OCI-LY7 (cell line): ENCODE measurements at regions of chr3 and their contacts with region 1.

Region 1: GRCh38 chr3:59839810-59840515 is 790.1 kb upstream of the CFAP20DC start:
- DNase-seq: peak; percentile 23
- H3K4me3 ChIP-seq: no peak overlapping the region
- H3K27ac ChIP-seq: peak overlapping the region; percentile 27
- H3K4me1 ChIP-seq: peaks cover 15% of the 10 kb centered on the region
- CTCF ChIP-seq: no peak

Region 2: DNA sequence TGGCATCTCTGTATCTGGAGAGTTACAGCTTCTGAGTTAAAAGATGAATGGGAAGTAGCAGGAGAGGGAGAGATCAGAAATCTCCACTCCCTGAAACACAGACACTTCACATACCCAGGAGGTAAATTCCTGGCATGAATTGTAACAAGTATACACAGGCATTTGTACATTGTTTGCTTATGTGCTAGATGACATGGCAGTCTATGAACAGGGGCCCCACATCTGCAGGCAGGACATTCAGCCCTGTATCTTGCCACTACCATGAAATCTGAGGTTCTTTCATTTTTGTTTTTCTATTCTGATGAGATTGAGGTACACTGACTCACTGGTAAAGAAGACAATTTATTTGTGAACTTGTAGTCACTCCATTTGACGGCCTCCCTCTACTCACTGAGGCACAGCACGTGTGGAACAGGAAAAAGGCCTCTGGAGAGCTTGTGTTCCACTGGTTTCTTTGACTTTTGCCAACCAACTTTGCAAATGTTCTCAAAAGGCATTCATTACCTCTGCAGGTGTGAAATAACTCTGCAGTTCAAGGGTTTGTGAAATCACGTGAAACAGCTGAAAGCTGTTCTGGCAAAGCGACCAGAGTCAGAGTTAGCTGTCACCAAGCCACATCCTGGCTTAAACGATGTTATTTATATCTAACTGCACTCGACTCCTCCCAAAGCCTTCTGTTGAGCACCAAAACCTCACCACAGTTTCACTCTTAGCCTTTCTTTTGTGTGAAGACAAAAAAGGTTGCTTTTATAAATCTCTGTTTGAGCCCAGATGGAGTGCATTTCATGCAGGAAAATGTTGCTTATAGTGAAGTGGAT is 388.8 kb before region 1 on chr3:
- CTCF ChIA-PET with region 1: no interaction called
- POLR2A ChIA-PET with region 1: no interaction called
- intact Hi-C with region 1: loop called (anchors 10 kb)
- DNase-seq: peak; percentile 92
- H3K4me3 ChIP-seq: peak overlapping the region; percentile 41
- H3K27ac ChIP-seq: peak overlapping the region; percentile 94
- H3K4me1 ChIP-seq: peaks cover 44% of the 10 kb centered on the region
- CTCF ChIP-seq: no peak

Region 3: DNA sequence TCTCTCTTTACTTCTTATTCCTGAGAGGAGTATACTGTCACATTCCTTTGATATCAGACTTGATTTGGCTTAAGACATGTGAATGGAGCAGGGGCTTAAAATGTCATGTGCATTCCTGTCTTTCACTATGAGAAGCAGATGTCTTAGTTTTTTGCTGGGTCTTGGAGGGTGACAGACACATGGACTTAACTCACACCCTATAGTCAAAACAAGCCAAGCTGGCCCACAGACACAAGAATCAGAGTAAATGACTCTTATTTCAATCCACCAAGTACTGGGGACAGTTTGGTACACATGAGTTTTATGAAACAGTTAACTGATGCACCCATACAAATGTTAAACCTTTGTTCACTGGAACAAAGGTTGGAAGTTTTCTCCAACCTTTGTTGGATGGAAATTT is 234.0 kb after region 1 on chr3:
- CTCF ChIA-PET with region 1: no interaction called
- POLR2A ChIA-PET with region 1: no interaction called
- intact Hi-C with region 1: no loop called
- DNase-seq: no peak
- H3K4me3 ChIP-seq: no peak overlapping the region
- H3K27ac ChIP-seq: no peak overlapping the region
- H3K4me1 ChIP-seq: peaks cover 61% of the 10 kb centered on the region
- CTCF ChIP-seq: no peak